ENCODE measurements at regions of chr6 and their contacts with region 1.

Region 1: DNA sequence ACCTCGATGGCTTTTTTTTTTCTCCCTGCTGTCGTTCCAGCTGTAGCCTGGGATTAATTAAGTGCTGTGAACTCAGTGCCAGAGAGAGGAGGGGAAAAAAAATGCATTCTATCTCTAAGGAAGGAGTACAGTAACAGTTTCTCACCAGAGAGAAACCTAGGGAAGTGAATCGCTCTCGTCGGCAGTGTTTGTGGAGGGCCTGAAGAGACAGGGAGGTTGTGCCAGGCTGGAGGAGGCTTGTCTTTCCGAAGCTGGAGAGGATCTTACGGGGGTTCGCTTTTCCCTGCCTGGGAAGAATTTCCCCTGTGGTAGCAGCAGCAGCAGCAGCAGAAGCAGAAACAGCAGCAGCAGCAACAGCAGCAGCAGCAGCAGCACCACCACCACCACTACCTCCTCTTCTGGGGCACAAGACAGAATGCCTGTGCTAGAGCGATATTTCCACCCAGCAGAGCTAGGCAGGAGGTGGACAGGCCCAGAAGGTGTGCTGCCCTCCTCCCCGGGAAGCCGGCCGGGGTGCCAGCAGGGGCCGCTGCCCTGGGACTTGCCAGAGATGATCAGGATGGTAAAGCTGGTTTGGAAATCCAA is 186.5 kb downstream of the PDE7B start:
- DNase-seq: peak; percentile 70
- H3K4me3 ChIP-seq: peak overlapping the region; percentile 53 to 97 (median 56)
- H3K27ac ChIP-seq: peak overlapping the region; percentile 93
- H3K4me1 ChIP-seq: peaks cover 70% of the 10 kb centered on the region
- H3K27me3 ChIP-seq: no peaks in the 10 kb centered on the region
- CTCF ChIP-seq: peak; percentile 20 to 39
- POLR2A ChIP-seq: no peak

Region 2: DNA sequence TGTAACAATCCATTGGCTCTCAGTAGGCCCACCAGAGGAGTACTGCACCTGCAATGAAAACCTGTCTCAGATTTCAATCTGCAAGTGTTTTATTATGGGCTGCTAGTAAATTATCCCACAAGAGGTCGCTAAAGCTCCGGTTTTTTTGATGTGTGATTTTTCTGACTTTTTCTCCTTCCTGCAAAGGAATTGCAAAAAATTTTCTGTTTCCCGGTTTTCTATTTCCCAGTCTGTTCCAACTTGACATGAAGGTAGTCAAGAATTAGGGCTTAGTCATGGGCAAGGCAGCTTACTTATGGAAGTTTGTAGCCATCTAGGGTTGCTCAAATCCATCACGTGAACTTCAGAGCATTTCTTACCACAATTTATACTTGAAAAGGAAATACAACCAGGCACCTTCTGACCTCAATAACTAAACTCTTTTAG is 502.0 kb before region 1 on chr6:
- CTCF ChIA-PET with region 1: interaction called, 17 read pairs
- POLR2A ChIA-PET with region 1: no interaction called
- dilution Hi-C with region 1: no loop called
- intact Hi-C with region 1: loop called (anchors 1 kb)
- DNase-seq: peak; percentile 70
- H3K4me3 ChIP-seq: no peak overlapping the region
- H3K27ac ChIP-seq: no peak overlapping the region
- H3K4me1 ChIP-seq: peaks cover 10% of the 10 kb centered on the region
- H3K27me3 ChIP-seq: no peaks in the 10 kb centered on the region
- CTCF ChIP-seq: peak; percentile 41 to 43
- POLR2A ChIP-seq: no peak

Region 3: DNA sequence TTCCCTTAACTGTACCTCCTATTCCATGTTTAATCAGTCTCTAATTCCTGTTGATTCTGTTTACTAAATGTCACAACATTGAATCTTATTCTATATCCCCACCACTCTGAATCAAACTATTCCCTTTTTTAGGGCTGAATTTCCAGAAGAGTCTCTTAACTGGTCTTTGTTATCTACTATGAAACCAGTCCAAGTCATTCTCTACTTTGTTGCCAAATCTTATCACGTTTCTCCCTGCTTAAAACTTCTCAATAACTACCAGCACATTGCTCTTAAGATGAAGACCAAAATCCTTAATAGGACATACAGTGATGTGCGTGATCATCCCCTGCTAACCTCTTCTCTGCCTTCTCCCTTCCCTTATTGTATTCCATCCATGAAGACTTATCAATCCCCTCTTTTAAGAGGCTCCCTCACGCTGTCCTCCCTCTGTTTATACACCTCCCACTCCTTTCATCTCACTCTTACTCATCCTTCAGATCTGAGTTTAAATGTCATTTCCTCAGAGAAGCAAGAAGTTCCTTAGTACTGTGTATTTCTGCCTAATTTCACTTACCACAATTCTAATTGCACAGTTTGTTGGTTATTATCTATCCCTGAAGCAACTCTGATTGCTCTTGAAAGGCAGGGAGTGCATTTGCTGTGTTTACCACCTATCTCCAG is 397.4 kb before region 1 on chr6:
- CTCF ChIA-PET with region 1: no interaction called
- POLR2A ChIA-PET with region 1: no interaction called
- dilution Hi-C with region 1: no loop called
- intact Hi-C with region 1: no loop called
- DNase-seq: no peak
- H3K4me3 ChIP-seq: no peak overlapping the region
- H3K27ac ChIP-seq: no peak overlapping the region
- H3K4me1 ChIP-seq: no peaks in the 10 kb centered on the region
- H3K27me3 ChIP-seq: no peaks in the 10 kb centered on the region
- CTCF ChIP-seq: no peak
- POLR2A ChIP-seq: no peak

Region 4: DNA sequence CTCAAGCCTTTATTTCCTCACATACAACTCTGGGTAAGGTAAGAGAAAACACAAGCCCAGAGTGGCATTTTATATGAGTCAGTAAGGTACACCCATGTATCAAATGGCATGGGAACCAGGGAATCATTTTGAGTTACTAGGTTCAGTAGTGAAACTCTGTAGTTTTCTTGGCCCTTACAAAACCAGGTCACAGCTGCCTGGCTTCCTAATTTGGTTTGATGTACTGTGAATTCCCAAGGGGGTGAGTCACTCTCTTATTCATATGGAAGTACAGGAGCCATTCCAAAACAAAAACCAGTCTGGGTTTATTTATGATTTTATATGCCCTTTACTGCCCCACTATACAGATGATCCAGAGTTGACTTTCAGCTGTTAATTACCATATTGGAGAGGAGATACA is 115.8 kb before region 1 on chr6:
- CTCF ChIA-PET with region 1: interaction called, 4 read pairs
- POLR2A ChIA-PET with region 1: no interaction called
- dilution Hi-C with region 1: no loop called
- intact Hi-C with region 1: loop called (anchors 1 kb)
- DNase-seq: peak; percentile 90
- H3K4me3 ChIP-seq: no peak overlapping the region
- H3K27ac ChIP-seq: peak overlapping the region; percentile 76
- H3K4me1 ChIP-seq: peaks cover 19% of the 10 kb centered on the region
- H3K27me3 ChIP-seq: no peaks in the 10 kb centered on the region
- CTCF ChIP-seq: no peak
- POLR2A ChIP-seq: no peak

Region 5: GRCh38 chr6:135987226-135987625 is 50.7 kb before region 1 on chr6:
- CTCF ChIA-PET with region 1: no interaction called
- POLR2A ChIA-PET with region 1: no interaction called
- dilution Hi-C with region 1: no loop called
- intact Hi-C with region 1: no loop called
- DNase-seq: no peak
- H3K4me3 ChIP-seq: no peak overlapping the region
- H3K27ac ChIP-seq: no peak overlapping the region
- H3K4me1 ChIP-seq: no peaks in the 10 kb centered on the region
- H3K27me3 ChIP-seq: no peaks in the 10 kb centered on the region
- CTCF ChIP-seq: no peak
- POLR2A ChIP-seq: no peak

Region 6: DNA sequence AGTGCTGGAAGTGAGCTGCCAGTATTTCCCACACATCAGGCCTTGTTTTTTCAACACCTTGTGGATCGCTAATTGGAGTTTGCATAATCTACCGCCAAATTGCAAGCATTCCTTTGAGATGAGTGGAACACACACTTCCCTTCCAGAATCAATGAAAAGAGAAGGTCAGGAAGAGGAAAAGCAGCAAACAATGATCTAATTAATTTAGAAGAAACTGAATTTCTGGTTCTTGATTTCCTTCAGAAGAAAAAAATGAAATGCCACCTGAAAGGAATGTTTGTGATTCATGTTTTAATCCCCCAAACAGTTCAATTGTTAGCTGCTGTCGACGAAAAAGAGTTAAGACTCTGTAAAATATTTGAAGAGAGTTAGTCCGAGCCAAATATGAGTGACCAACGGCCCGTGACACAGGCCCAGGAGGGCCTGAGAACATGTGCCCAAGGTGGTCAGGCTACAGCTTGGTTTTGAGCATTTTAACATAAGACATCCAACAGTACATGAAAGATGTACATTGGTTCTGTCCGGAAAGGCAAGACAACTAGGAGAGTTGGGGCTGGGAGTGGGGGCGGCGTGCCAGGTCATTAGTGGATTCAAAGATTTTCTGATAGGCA is 29.9 kb after region 1 on chr6:
- CTCF ChIA-PET with region 1: interaction called, 11 read pairs
- POLR2A ChIA-PET with region 1: interaction called, 9 read pairs
- dilution Hi-C with region 1: no loop called
- intact Hi-C with region 1: loop called (anchors 1 kb)
- DNase-seq: peak; percentile 95
- H3K4me3 ChIP-seq: peak overlapping the region in 1 of 3 experiments; percentile 21
- H3K27ac ChIP-seq: peak overlapping the region; percentile 100
- H3K4me1 ChIP-seq: peaks cover 48% of the 10 kb centered on the region
- H3K27me3 ChIP-seq: no peaks in the 10 kb centered on the region
- CTCF ChIP-seq: no peak
- POLR2A ChIP-seq: peak; percentile 24

Region 7: DNA sequence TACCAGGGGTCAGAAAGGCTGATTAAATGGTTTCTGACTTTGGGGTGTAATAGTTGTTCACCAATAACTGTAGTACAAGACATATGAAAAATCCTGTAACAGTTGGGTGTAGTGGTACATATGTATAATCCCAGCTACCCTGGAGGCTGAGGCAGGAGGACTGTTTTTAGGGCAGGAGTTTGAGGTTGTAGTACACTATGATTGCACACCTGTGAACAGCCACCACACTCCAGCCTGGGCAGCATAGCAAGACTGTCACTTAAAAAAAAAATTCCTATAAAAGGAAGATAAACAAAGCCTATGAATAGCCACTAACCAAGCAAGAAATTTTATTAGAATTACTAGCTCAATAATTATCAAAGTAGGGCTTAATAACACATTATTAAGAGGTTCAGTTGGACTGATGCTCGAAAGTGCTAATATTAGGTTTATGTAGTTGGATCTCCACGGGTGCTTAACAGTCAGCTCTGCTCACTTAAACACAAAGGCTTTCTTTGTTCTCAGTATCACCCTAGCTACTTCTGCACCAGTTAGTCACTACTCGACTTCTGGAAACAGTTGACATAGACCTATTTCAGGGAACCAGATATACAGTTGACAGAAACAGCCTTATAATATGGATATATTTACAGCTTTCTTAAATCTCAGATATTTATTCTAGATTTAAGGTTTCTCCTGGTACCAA is 99.2 kb after region 1 on chr6:
- CTCF ChIA-PET with region 1: no interaction called
- POLR2A ChIA-PET with region 1: no interaction called
- dilution Hi-C with region 1: no loop called
- intact Hi-C with region 1: no loop called
- DNase-seq: no peak
- H3K4me3 ChIP-seq: no peak overlapping the region
- H3K27ac ChIP-seq: no peak overlapping the region
- H3K4me1 ChIP-seq: no peaks in the 10 kb centered on the region
- H3K27me3 ChIP-seq: no peaks in the 10 kb centered on the region
- CTCF ChIP-seq: no peak
- POLR2A ChIP-seq: no peak

Region 8: GRCh38 chr6:136150961-136151360 is 113.0 kb after region 1 on chr6:
- CTCF ChIA-PET with region 1: interaction called, 5 read pairs
- POLR2A ChIA-PET with region 1: no interaction called
- dilution Hi-C with region 1: no loop called
- intact Hi-C with region 1: loop called (anchors 1 kb)
- DNase-seq: peak; percentile 60
- H3K4me3 ChIP-seq: no peak overlapping the region
- H3K27ac ChIP-seq: peak overlapping the region; percentile 53
- H3K4me1 ChIP-seq: peaks cover 18% of the 10 kb centered on the region
- H3K27me3 ChIP-seq: no peaks in the 10 kb centered on the region
- CTCF ChIP-seq: no peak
- POLR2A ChIP-seq: no peak

Region 9: GRCh38 chr6:136289579-136290409 is 251.8 kb after region 1 on chr6 and contains the start of gene BCLAF1:
- CTCF ChIA-PET with region 1: no interaction called
- POLR2A ChIA-PET with region 1: no interaction called
- dilution Hi-C with region 1: no loop called
- intact Hi-C with region 1: loop called (anchors 5 kb)
- DNase-seq: peak; percentile 100
- H3K4me3 ChIP-seq: peak within 1 kb of the TSS; percentile 38 to 90 (median 70)
- H3K27ac ChIP-seq: peak within 1 kb of the TSS; percentile 96
- H3K4me1 ChIP-seq: peaks cover 30% of the 10 kb centered on the region
- H3K27me3 ChIP-seq: peaks cover 0 to 3% of the 10 kb centered on the region in 2 experiments
- CTCF ChIP-seq: no peak
- POLR2A ChIP-seq: peak; percentile 98
- total RNA-seq, gene BCLAF1: 151 and 156 TPM in 2 replicates